HepG2 (cell line): ENCODE measurements at regions of chr1 and their contacts with region 1.

Region 1: DNA sequence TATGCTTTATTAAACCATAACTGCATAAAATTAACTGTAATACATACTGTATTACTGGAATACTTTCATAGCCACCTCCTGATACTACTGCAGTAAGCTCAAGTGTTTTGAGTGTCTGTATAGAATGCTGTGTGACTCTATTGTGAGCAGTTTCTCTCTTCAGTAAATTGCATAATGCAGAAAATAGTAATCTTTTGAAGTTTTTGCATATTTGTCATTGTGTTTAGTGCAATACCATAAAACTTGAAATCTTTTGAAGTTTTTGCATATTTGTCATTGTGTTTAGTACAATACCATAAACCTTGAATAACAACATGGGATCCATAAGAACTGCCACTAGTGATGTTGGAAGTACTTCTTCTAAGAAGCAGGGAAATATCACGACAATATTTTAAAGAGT is 11.2 kb downstream of the TPR start:
- DNase-seq: no peak
- ATAC-seq: no peak
- H3K4me3 ChIP-seq: no peak overlapping the region
- H3K27ac ChIP-seq: no peak overlapping the region
- H3K4me1 ChIP-seq: no peaks in the 10 kb centered on the region
- H3K27me3 ChIP-seq: no peaks in the 10 kb centered on the region
- CTCF ChIP-seq: no peak
- EP300 ChIP-seq: no peak
- POLR2A ChIP-seq: no peak
- RAD21 ChIP-seq: no peak

Region 2: DNA sequence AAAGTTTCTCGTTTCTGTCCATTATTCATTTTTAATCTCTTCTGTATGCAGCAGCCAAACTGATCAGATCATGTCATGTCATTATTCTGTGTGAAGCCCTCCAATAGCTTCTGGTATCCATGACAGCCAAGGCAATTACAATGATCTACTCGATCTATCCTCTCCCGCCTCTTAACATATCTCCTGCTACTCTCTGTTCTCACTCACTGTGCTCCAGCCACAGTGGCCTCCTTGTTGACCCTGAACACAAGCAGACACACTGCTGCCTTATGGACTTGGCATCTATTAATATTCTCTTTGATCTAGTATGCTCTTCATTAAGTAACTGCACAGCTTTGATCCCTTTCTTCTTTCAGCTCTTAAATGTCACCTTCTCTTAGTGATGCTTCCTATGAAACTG is 48.3 kb before region 1 on chr1:
- CTCF ChIA-PET with region 1: no interaction called
- POLR2A ChIA-PET with region 1: no interaction called
- in situ Hi-C with region 1: loop called (anchors 5 kb)
- intact Hi-C with region 1: no loop called
- DNase-seq: no peak
- ATAC-seq: no peak
- H3K4me3 ChIP-seq: no peak overlapping the region
- H3K27ac ChIP-seq: no peak overlapping the region
- H3K4me1 ChIP-seq: no peaks in the 10 kb centered on the region
- H3K27me3 ChIP-seq: no peaks in the 10 kb centered on the region
- CTCF ChIP-seq: no peak
- EP300 ChIP-seq: no peak
- POLR2A ChIP-seq: no peak
- RAD21 ChIP-seq: no peak